ENCODE measurements at regions of chr10 and their contacts with region 1.

Region 1: DNA sequence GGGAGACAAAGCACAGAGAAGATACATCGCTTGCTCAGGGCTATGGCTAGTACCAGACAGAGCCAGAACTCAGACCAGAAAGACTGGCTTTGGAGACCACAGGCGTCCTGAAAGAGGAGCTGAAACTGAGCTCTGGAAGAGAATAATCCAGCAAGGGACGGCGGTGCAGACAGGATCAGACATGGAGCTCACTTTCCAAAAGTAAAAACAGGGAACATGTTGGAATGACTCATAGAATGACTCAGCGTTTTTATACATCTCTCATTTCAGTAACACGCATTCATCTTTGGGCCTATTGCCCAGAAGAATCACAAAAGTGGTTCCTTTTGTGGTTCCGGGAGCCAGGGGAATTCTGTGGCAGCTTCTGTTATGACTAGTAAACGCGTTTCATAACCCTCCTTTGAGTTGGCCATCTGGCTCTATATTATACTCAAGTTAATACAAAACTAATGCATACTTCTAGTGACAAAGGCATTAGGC is 37.2 kb downstream of the PLEKHS1 start:
- DNase-seq: peak; percentile 62
- ATAC-seq: peak; percentile 93
- H3K4me3 ChIP-seq: no peak overlapping the region
- H3K27ac ChIP-seq: no peak overlapping the region; the same call in 1 of the 2 replicates
- H3K4me1 ChIP-seq: peaks cover 6% of the 10 kb centered on the region; the same call in 1 of the 2 replicates
- H3K27me3 ChIP-seq: no peaks in the 10 kb centered on the region
- CTCF ChIP-seq: no peak
- EP300 ChIP-seq: peak; percentile 84 to 93
- POLR2A ChIP-seq: no peak
- RAD21 ChIP-seq: no peak

Region 2: DNA sequence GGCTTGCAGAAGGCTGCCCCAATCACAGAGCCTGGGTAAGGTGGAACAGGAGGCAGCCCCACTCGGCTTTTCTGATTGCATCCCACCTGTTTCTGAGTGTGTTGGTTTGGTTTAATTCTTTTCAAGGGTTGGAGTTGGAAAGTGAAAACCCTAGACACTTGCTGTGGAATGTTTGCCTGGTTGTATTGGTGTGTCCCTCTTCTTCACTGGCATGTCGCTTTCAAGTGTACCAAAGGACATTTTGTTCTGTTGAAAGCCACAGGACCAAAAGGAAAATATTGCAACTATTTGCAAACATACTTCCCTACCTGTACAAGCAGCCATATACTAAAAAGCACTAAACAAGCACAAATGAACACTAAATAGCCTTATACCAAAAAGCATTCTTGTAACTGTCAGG is 126.3 kb after region 1 on chr10:
- CTCF ChIA-PET with region 1: no interaction called
- POLR2A ChIA-PET with region 1: no interaction called
- RAD21 ChIA-PET with region 1: no interaction called
- SMC1A ChIA-PET with region 1: no interaction called
- in situ Hi-C with region 1: no loop called
- intact Hi-C with region 1: loop called (anchors 10 kb)
- DNase-seq: no peak
- ATAC-seq: no peak
- H3K4me3 ChIP-seq: no peak overlapping the region
- H3K27ac ChIP-seq: no peak overlapping the region
- H3K4me1 ChIP-seq: no peaks in the 10 kb centered on the region
- H3K27me3 ChIP-seq: no peaks in the 10 kb centered on the region
- CTCF ChIP-seq: no peak
- EP300 ChIP-seq: no peak
- POLR2A ChIP-seq: no peak
- RAD21 ChIP-seq: no peak